ENCODE measurements at regions of chrX and their contacts with region 1.

Region 1: GRCh38 chrX:47144626-47145394 is at the starts of genes NDUFB11 and RBM10:
- DNase-seq: peak; percentile 87 to 95 (median 91)
- H3K4me3 ChIP-seq: peak within 1 kb of the TSS; percentile 69 to 73
- H3K4me3 Mint-ChIP-seq: peak within 1 kb of the TSS; percentile 94 to 99 (median 96)
- H3K27ac ChIP-seq: peak within 1 kb of the TSS; percentile 91
- H3K27ac Mint-ChIP-seq: peak within 1 kb of the TSS; percentile 95 to 99 (median 98)
- H3K4me1 ChIP-seq: peaks cover 36% of the 10 kb centered on the region
- H3K4me1 Mint-ChIP-seq: peaks cover 19 to 52% (median 33%) of the 10 kb centered on the region in 4 donors
- H3K27me3 ChIP-seq: no peaks in the 10 kb centered on the region
- H3K27me3 Mint-ChIP-seq: no peaks in the 10 kb centered on the region
- total RNA-seq, gene NDUFB11: 53.2 to 60.6 TPM
- total RNA-seq, gene RBM10: 51.2 to 53.3 TPM

Region 2: GRCh38 chrX:47129157-47129898 is 15.5 kb before region 1 on chrX:
- CTCF ChIA-PET with region 1: interaction called, 13 read pairs
- POLR2A ChIA-PET with region 1: interaction called, 54 read pairs
- intact Hi-C with region 1: loop called (anchors 1 kb)
- DNase-seq: peak; percentile 91 to 93 (median 92)
- H3K4me3 ChIP-seq: peak overlapping the region; percentile 61 to 73
- H3K4me3 Mint-ChIP-seq: peak overlapping the region; percentile 92 to 99 (median 96)
- H3K27ac ChIP-seq: peak overlapping the region; percentile 64
- H3K27ac Mint-ChIP-seq: peak overlapping the region; percentile 95 to 98 (median 97)
- H3K4me1 ChIP-seq: no peaks in the 10 kb centered on the region
- H3K4me1 Mint-ChIP-seq: peaks cover 0 to 11% (median under 1%) of the 10 kb centered on the region in 4 donors
- H3K27me3 ChIP-seq: no peaks in the 10 kb centered on the region
- H3K27me3 Mint-ChIP-seq: no peaks in the 10 kb centered on the region

Region 3: DNA sequence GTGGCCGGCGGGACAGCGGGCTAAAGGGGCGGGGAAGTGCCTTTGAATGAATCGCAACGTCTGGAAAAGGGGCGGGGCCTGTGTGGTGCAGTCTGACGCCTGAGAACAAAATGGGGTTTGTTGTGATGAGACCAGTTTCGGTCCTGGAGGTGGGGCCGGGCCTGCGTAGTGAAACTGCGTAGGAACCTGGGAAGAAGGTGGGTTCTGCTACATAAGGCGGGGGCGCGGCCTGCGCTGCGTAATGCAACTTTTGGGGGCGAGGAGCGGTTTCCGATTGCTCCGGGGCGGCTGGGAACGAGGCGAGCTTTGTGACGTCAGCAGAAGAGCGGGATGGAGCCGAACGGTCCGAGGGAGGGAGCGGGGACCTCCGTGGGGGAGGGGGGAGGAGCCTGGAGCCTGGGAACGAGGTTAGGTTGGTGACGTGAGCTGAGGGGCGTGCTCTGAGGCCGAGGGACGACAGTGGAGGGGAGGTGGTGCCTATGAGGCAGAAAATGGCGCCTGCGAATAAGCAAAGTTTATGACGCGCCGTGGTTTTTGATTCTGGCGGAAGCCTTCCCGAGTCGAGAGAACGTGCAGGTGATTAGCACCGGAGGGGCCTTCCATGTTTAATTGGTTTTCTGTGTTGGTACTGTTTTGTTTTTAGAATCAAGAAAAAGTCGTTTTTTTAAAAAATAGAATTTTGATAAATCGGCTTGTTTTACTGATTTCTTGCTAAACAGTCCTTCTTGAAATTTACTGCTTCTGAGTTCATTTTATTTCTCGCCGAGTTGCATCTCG is 88.7 kb after region 1 on chrX:
- CTCF ChIA-PET with region 1: no interaction called
- POLR2A ChIA-PET with region 1: interaction called, 13 read pairs
- intact Hi-C with region 1: loop called (anchors 1 kb)
- DNase-seq: peak; percentile 95 to 98 (median 96)
- H3K4me3 ChIP-seq: peak overlapping the region in 1 of 2 donors; percentile 60
- H3K4me3 Mint-ChIP-seq: peak overlapping the region; percentile 86 to 96 (median 91)
- H3K27ac ChIP-seq: peak overlapping the region; percentile 97
- H3K27ac Mint-ChIP-seq: peak overlapping the region; percentile 93 to 100 (median 98)
- H3K4me1 ChIP-seq: peaks cover 31% of the 10 kb centered on the region
- H3K4me1 Mint-ChIP-seq: peaks cover 11 to 34% (median 25%) of the 10 kb centered on the region in 4 donors
- H3K27me3 ChIP-seq: no peaks in the 10 kb centered on the region
- H3K27me3 Mint-ChIP-seq: no peaks in the 10 kb centered on the region

Region 4: DNA sequence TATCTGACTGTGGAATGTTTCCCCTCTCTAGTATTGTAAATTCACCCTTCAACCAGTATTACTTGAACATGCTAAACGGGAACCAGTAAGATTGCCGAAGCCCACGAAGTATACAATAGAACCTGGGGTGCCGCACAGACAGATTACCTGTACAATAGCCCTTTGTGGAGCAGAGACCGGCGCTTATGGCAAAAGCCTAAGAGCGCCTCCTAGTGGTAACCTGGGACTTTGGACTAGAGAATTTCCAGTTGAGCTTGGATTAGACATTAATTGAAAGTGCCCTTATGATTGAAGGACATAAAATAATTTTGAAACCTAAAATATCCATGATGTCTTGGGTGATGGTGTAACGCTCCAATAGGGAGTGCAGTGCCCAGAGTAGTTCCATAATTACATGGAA is 239.7 kb after region 1 on chrX:
- CTCF ChIA-PET with region 1: interaction called, 4 read pairs
- POLR2A ChIA-PET with region 1: interaction called, 6 read pairs
- intact Hi-C with region 1: loop called (anchors 5 kb)
- DNase-seq: peak; percentile 71 to 80 (median 77)
- H3K4me3 ChIP-seq: no peak overlapping the region
- H3K4me3 Mint-ChIP-seq: peak overlapping the region in 1 of 8 donors; percentile 43
- H3K27ac ChIP-seq: no peak overlapping the region
- H3K27ac Mint-ChIP-seq: peak overlapping the region in 2 of 7 donors; percentile 14 to 70
- H3K4me1 ChIP-seq: peaks cover 18% of the 10 kb centered on the region
- H3K4me1 Mint-ChIP-seq: peaks cover 9 to 20% (median 13%) of the 10 kb centered on the region in 4 donors
- H3K27me3 ChIP-seq: no peaks in the 10 kb centered on the region
- H3K27me3 Mint-ChIP-seq: no peaks in the 10 kb centered on the region

Region 5: GRCh38 chrX:47650164-47651042 is 505.6 kb after region 1 on chrX and contains the start of gene ELK1:
- CTCF ChIA-PET with region 1: no interaction called
- POLR2A ChIA-PET with region 1: interaction called, 5 read pairs
- intact Hi-C with region 1: loop called (anchors 1 kb)
- DNase-seq: peak; percentile 85 to 95 (median 90)
- H3K4me3 ChIP-seq: peak within 1 kb of the TSS in 1 of 2 donors; percentile 69
- H3K4me3 Mint-ChIP-seq: peak within 1 kb of the TSS; percentile 85 to 94 (median 88)
- H3K27ac ChIP-seq: peak within 1 kb of the TSS; percentile 74
- H3K27ac Mint-ChIP-seq: peak within 1 kb of the TSS; percentile 87 to 97 (median 97)
- H3K4me1 ChIP-seq: peaks cover 33% of the 10 kb centered on the region
- H3K4me1 Mint-ChIP-seq: peaks cover 31 to 42% (median 36%) of the 10 kb centered on the region in 4 donors
- H3K27me3 ChIP-seq: no peaks in the 10 kb centered on the region
- H3K27me3 Mint-ChIP-seq: no peaks in the 10 kb centered on the region
- total RNA-seq, gene ELK1: 36.4 to 38.3 TPM

Region 6: GRCh38 chrX:47658684-47659515 is 514.1 kb after region 1 on chrX and contains the start of gene UXT:
- CTCF ChIA-PET with region 1: no interaction called
- POLR2A ChIA-PET with region 1: interaction called, 3 read pairs
- intact Hi-C with region 1: loop called (anchors 2 kb)
- DNase-seq: peak; percentile 89 to 96 (median 93)
- H3K4me3 ChIP-seq: peak within 1 kb of the TSS; percentile 61 to 90
- H3K4me3 Mint-ChIP-seq: peak within 1 kb of the TSS; percentile 87 to 93 (median 91)
- H3K27ac ChIP-seq: peak within 1 kb of the TSS; percentile 95
- H3K27ac Mint-ChIP-seq: peak within 1 kb of the TSS; percentile 96 to 99 (median 98)
- H3K4me1 ChIP-seq: peaks cover 16% of the 10 kb centered on the region
- H3K4me1 Mint-ChIP-seq: peaks cover 3 to 28% (median 8%) of the 10 kb centered on the region in 4 donors
- H3K27me3 ChIP-seq: no peaks in the 10 kb centered on the region
- H3K27me3 Mint-ChIP-seq: no peaks in the 10 kb centered on the region
- total RNA-seq, gene UXT: 172 to 188 TPM

Measured in CD4-positive, alpha-beta memory T cell (primary cell).